ENCODE measurements at regions of chr3 and their contacts with region 1.

Region 1: DNA sequence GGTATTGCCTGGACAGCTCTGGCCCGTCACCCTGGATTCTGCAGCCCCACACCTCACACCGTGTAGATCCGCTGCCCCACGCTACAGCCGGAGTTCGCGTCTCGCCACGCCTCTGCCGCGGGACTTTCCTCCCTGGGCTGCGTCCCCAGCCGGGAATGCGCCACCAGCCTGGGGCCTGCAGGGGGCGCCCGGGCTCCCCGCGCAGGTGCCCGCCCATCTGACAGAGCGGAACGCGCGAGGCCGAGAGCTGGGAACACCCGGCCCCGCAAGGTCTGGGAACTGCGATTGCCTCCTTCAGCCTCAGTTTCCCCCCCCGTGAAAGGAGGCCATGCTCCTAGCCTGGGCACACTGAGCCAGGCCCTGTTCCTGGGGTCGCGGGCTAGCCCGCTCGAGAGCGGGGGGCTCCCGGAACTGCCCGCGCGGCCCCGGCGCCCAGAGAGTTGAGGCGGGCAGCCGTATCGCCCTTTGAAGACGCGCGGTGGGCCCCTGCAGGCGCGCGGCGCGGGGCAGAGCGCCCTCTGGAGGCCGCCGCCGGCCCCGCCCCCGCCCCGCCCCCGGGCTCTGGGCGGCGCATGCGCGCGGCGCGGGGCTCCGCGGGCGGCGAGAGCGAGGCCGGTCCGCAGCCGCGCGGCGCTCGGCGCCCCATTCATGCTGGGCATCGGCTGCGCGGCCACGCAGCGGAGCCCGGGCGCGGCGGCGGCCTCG is at the start of gene PLXNA1:
- DNase-seq: peak; percentile 96
- ATAC-seq: peak; percentile 73
- H3K4me3 ChIP-seq: peak within 1 kb of the TSS in 4 of 5 experiments; percentile 56 to 74 (median 64)
- H3K4me3 Mint-ChIP-seq: peak within 1 kb of the TSS; percentile 97
- H3K27ac ChIP-seq: peak within 1 kb of the TSS; percentile 97
- H3K27ac Mint-ChIP-seq: peak within 1 kb of the TSS; percentile 97
- H3K4me1 ChIP-seq: peaks cover 17 to 24% of the 10 kb centered on the region in 2 donors
- H3K4me1 Mint-ChIP-seq: peaks cover 19% of the 10 kb centered on the region
- H3K27me3 ChIP-seq: peaks cover 0 to 33% (median 9%) of the 10 kb centered on the region in 4 experiments
- H3K27me3 Mint-ChIP-seq: peaks cover 13% of the 10 kb centered on the region
- CTCF ChIP-seq: peak; percentile 96
- total RNA-seq, gene PLXNA1: 22.3 and 24.2 TPM in 2 replicates

Region 2: DNA sequence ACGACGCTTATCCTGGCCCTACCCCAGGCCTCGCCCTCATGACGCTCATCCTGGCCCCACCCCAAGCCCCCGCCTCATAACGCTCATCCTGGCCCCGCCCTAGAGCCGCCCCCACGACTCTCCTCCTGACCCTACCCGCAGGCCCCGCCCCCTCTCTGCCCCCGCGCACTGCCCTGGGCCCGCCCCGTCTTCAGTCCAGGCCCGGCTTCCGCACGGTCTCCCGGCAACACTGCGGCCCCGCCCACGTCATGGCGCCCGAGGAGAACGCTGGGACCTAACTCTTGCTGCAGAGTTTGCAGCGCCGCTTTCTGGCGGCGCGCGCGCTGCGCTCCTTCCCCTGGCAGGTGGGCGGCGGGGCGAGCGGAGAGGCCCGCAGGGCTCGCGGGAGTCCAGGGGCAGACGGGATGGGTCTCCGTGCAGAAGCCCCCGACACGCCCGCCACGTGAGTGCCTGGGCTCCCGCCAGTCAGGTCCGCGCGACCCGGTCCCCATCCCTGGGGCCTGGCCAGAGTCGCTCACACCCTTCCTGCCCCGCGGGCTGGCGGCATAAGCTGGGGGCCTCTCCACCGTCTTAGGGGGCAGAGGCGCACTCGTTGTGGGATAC is 1066.1 kb before region 1 on chr3:
- CTCF ChIA-PET with region 1: no interaction called
- POLR2A ChIA-PET with region 1: no interaction called
- intact Hi-C with region 1: loop called (anchors 10 kb)
- DNase-seq: peak; percentile 94
- ATAC-seq: peak; percentile 90
- H3K4me3 ChIP-seq: peak overlapping the region; percentile 21 to 77 (median 74)
- H3K4me3 Mint-ChIP-seq: peak overlapping the region; percentile 93
- H3K27ac ChIP-seq: peak overlapping the region; percentile 78 to 85
- H3K27ac Mint-ChIP-seq: peak overlapping the region; percentile 96
- H3K4me1 ChIP-seq: peaks cover 0 to 15% of the 10 kb centered on the region in 2 donors
- H3K4me1 Mint-ChIP-seq: peaks cover 11% of the 10 kb centered on the region
- H3K27me3 ChIP-seq: no peaks in the 10 kb centered on the region
- H3K27me3 Mint-ChIP-seq: no peaks in the 10 kb centered on the region
- CTCF ChIP-seq: no peak

Region 3: DNA sequence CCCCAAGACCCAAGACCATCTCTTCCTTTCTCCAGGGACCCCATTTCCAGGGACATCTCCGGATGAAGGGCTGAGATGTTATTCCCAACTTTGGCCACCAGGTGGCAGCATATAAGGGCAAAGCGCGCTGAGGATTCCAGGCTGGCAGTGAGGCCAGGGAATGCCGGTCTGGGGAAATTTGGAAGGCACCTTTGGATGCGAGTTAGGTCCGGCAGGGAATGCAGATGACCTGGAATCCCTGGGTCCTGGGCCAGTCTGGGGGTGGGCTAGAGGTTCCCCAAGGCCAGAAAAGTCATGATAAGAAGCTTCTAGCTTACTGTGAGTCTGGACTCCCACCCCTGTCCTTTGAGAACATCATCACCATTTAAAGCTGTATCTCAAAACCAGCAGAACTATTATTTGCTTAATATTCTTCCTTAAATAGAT is 460.2 kb before region 1 on chr3:
- CTCF ChIA-PET with region 1: no interaction called
- POLR2A ChIA-PET with region 1: no interaction called
- intact Hi-C with region 1: loop called (anchors 5 kb)
- DNase-seq: peak; percentile 66
- ATAC-seq: peak; percentile 24
- H3K4me3 ChIP-seq: no peak overlapping the region
- H3K4me3 Mint-ChIP-seq: no peak overlapping the region
- H3K27ac ChIP-seq: no peak overlapping the region
- H3K27ac Mint-ChIP-seq: no peak overlapping the region
- H3K4me1 ChIP-seq: peaks cover 0 to 7% of the 10 kb centered on the region in 2 donors
- H3K4me1 Mint-ChIP-seq: no peaks in the 10 kb centered on the region
- H3K27me3 ChIP-seq: peaks cover 0 to 35% (median 8%) of the 10 kb centered on the region in 4 experiments
- H3K27me3 Mint-ChIP-seq: peaks cover 31% of the 10 kb centered on the region
- CTCF ChIP-seq: peak; percentile 87

Region 4: GRCh38 chr3:126752303-126752842 is 230.2 kb before region 1 on chr3:
- CTCF ChIA-PET with region 1: interaction called, 47 read pairs
- POLR2A ChIA-PET with region 1: no interaction called
- intact Hi-C with region 1: loop called (anchors 1 kb)
- DNase-seq: peak; percentile 63
- ATAC-seq: peak; percentile 82
- H3K4me3 ChIP-seq: no peak overlapping the region
- H3K4me3 Mint-ChIP-seq: no peak overlapping the region
- H3K27ac ChIP-seq: no peak overlapping the region
- H3K27ac Mint-ChIP-seq: no peak overlapping the region
- H3K4me1 ChIP-seq: no peaks in the 10 kb centered on the region
- H3K4me1 Mint-ChIP-seq: no peaks in the 10 kb centered on the region
- H3K27me3 ChIP-seq: no peaks in the 10 kb centered on the region
- H3K27me3 Mint-ChIP-seq: no peaks in the 10 kb centered on the region
- CTCF ChIP-seq: peak; percentile 76

Region 5: GRCh38 chr3:126816986-126817777 is 165.4 kb before region 1 on chr3:
- CTCF ChIA-PET with region 1: no interaction called
- POLR2A ChIA-PET with region 1: no interaction called
- intact Hi-C with region 1: no loop called
- DNase-seq: no peak
- ATAC-seq: no peak
- H3K4me3 ChIP-seq: no peak overlapping the region
- H3K4me3 Mint-ChIP-seq: no peak overlapping the region
- H3K27ac ChIP-seq: no peak overlapping the region
- H3K27ac Mint-ChIP-seq: no peak overlapping the region
- H3K4me1 ChIP-seq: no peaks in the 10 kb centered on the region
- H3K4me1 Mint-ChIP-seq: no peaks in the 10 kb centered on the region
- H3K27me3 ChIP-seq: no peaks in the 10 kb centered on the region
- H3K27me3 Mint-ChIP-seq: no peaks in the 10 kb centered on the region
- CTCF ChIP-seq: no peak

Region 6: DNA sequence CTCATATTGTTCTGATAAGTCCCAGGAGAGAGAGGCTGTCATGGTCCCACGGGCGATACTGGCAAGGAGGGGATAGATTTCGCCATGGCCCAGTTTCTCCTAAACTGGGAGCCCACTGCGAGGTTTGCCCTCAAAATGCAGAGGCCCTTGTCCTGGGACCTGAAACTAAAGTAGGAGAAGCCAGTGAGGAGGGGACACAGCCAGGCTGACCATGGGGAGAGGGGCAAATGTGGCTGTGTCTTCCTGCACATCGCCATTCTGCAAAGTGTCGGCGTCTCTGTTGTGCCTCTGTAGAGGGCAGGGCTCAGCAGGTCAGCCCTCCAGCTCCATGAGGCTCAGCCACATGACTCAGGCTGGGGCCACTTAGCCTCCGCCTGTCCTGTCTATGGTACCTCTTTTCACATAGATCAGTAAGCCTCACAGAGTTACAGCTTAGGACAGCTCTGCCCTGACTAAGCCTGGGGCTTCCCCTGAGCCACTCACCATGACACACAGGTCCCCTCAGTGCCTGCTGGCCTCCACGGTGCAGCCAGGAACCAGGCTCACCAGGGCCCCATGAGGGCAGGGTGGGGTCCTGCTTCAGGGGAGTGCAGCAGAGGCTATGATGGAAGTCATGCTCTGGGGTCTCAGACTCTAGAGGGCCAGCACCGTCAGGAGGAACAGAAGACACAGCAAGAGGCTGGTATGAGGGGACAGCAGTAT is 28.3 kb before region 1 on chr3:
- CTCF ChIA-PET with region 1: interaction called, 6 read pairs
- POLR2A ChIA-PET with region 1: interaction called, 11 read pairs
- intact Hi-C with region 1: loop called (anchors 1 kb)
- DNase-seq: no peak
- ATAC-seq: peak; percentile 75
- H3K4me3 ChIP-seq: peak overlapping the region in 2 of 5 experiments; percentile 7 to 29
- H3K4me3 Mint-ChIP-seq: peak overlapping the region; percentile 69
- H3K27ac ChIP-seq: peak overlapping the region; percentile 78 to 87
- H3K27ac Mint-ChIP-seq: peak overlapping the region; percentile 91
- H3K4me1 ChIP-seq: peaks cover 13 to 27% of the 10 kb centered on the region in 2 donors
- H3K4me1 Mint-ChIP-seq: peaks cover 44% of the 10 kb centered on the region
- H3K27me3 ChIP-seq: no peaks in the 10 kb centered on the region
- H3K27me3 Mint-ChIP-seq: no peaks in the 10 kb centered on the region
- CTCF ChIP-seq: no peak

Region 7: GRCh38 chr3:128725932-128726690 is 1743.5 kb after region 1 on chr3 and contains the start of gene RAB7A:
- CTCF ChIA-PET with region 1: no interaction called
- POLR2A ChIA-PET with region 1: no interaction called
- intact Hi-C with region 1: loop called (anchors 5 kb)
- DNase-seq: peak; percentile 99
- ATAC-seq: peak; percentile 96
- H3K4me3 ChIP-seq: peak within 1 kb of the TSS; percentile 79 to 98 (median 93)
- H3K4me3 Mint-ChIP-seq: peak within 1 kb of the TSS; percentile 99
- H3K27ac ChIP-seq: peak within 1 kb of the TSS; percentile 92 to 99
- H3K27ac Mint-ChIP-seq: peak within 1 kb of the TSS; percentile 100
- H3K4me1 ChIP-seq: peaks cover 45 to 46% of the 10 kb centered on the region in 2 donors
- H3K4me1 Mint-ChIP-seq: peaks cover 52% of the 10 kb centered on the region
- H3K27me3 ChIP-seq: no peaks in the 10 kb centered on the region
- H3K27me3 Mint-ChIP-seq: peaks cover 7% of the 10 kb centered on the region
- CTCF ChIP-seq: no peak
- total RNA-seq, gene RAB7A: 138 and 144 TPM in 2 replicates